ENCODE measurements at regions of chr6 and their contacts with region 1.

Region 1: DNA sequence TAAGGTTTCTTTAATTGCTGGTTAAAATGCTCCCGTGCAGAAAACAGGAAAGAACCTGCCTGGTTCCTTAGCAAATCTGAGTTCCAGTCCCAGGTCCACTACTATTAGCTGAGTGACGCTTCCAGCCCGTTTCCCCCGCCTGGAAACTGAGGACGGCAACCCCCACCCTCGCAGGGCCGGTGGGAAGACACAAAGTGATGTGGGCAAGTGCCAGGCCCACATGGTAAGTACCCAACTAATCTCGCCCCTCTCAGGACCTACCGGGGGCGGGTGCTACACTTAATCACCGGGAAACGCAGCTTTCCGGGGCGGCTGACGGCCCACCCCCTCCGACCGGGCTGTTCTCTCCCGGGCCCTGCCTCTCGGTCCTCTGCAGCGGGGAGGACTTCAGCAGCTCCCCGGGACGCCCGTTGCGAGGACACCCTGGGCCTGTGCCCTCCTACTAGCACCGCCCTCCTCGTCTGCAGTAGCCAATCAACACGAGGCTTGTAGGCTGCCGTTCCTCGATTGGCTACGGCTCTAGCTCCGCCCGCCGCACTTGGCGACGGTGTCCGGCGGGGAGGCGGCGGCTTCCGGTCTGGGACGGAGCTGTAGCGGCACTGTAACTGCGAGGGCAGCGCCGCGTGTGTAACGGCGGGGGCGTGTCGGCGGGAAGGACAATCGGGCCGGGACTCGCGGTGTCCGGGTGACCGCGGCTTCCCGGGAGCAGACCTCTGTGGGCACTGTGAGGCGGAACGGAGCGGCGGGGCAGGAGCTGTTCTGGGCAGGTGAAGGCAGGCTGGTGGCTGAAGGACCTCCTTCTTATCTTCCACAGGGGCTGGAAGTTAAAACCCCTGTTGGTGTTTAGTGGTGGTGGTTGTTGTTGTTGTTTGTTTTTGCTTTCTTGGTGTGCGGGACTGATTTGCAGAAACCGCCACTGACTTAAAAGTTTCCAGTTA is at the start of gene ZBTB9:
- DNase-seq: peak; percentile 96
- H3K4me3 Mint-ChIP-seq: peak within 1 kb of the TSS; percentile 87
- H3K27ac Mint-ChIP-seq: peak within 1 kb of the TSS; percentile 85
- H3K4me1 Mint-ChIP-seq: peaks cover 47% of the 10 kb centered on the region
- H3K27me3 Mint-ChIP-seq: no peaks in the 10 kb centered on the region
- total RNA-seq, gene ZBTB9: 5.0 to 6.5 TPM

Region 2: DNA sequence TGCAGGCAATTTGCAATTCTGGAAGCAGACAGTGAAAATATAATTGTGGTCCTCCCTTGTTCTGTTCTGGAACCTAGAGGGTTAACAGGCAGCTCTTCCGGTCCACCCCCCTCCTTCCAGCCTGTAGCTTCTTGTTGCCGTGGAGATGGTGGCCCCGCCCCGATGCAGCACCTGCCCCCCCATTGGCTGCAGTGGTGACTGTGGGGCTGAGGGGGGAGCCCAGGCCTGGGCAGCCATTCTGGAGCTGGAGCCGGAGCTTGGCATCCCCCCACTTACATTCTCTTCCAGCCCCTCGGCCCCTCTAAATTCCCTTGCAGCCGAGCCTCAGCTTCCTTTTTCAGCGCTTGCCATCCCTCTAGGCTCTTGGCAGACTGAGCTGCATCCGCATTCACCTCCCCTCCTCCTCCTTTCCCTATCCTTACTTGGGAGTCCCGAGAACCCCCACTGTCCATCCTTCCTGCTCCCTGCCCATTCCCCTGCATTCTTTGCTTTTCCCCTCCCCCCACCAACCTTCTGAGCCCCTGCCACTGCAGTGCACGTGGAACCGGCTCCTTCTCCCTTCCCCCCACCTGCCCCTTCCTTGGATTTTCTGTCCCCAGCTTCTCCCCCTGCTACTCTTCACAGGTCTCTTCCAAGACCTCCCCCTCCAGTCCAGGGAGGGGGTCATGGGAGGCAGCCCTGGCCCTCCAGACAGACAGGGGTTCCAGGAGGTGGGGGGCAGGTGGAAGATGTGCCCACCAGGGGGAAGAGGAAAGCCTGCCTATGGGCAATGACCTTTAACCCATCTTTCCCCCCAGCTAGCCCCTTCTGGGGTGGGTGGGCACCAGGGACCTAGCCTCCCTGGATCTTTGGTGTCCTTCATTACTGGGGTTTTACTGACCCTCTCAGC is 23.0 kb before region 1 on chr6:
- CTCF ChIA-PET with region 1: interaction called, 4 read pairs
- intact Hi-C with region 1: loop called (anchors 1 kb)
- DNase-seq: peak; percentile 86
- H3K4me3 Mint-ChIP-seq: peak overlapping the region; percentile 67
- H3K27ac Mint-ChIP-seq: peak overlapping the region; percentile 64
- H3K4me1 Mint-ChIP-seq: peaks cover 60% of the 10 kb centered on the region
- H3K27me3 Mint-ChIP-seq: no peaks in the 10 kb centered on the region

Region 3: DNA sequence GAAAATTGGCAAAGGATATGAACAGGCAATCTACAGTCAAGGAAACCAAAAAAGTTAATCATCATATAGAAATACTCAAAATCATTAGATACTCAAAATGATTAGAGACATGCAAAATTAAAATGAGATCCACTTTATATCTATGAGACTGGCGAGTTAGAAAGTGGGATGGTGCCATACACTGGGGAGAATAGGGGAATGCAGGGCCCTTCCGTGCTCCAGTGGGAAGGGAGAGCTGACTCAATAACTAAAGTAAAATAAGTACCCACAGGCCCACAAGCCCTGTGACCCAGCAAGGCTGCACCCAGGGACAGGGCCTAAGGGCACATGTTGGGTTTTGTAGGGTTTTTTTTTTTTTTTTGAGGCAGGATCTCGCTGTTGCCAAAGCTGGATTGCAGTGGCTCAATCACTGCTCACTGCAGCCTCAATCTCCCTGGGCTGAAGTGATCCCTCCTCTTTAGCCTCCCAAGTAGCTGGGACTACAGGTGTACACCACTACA is 80.9 kb after region 1 on chr6:
- CTCF ChIA-PET with region 1: no interaction called
- intact Hi-C with region 1: loop called (anchors 1 kb)
- DNase-seq: no peak
- H3K4me3 Mint-ChIP-seq: no peak overlapping the region
- H3K27ac Mint-ChIP-seq: no peak overlapping the region
- H3K4me1 Mint-ChIP-seq: peaks cover 25% of the 10 kb centered on the region
- H3K27me3 Mint-ChIP-seq: no peaks in the 10 kb centered on the region

Measured in activated naive CD4-positive, alpha-beta T cell treated with anti-CD3 and anti-CD28 coated beads for 36 hours (primary cell).